A549 (cell line): ENCODE measurements at regions of chr17 and their contacts with region 1.

Region 1: DNA sequence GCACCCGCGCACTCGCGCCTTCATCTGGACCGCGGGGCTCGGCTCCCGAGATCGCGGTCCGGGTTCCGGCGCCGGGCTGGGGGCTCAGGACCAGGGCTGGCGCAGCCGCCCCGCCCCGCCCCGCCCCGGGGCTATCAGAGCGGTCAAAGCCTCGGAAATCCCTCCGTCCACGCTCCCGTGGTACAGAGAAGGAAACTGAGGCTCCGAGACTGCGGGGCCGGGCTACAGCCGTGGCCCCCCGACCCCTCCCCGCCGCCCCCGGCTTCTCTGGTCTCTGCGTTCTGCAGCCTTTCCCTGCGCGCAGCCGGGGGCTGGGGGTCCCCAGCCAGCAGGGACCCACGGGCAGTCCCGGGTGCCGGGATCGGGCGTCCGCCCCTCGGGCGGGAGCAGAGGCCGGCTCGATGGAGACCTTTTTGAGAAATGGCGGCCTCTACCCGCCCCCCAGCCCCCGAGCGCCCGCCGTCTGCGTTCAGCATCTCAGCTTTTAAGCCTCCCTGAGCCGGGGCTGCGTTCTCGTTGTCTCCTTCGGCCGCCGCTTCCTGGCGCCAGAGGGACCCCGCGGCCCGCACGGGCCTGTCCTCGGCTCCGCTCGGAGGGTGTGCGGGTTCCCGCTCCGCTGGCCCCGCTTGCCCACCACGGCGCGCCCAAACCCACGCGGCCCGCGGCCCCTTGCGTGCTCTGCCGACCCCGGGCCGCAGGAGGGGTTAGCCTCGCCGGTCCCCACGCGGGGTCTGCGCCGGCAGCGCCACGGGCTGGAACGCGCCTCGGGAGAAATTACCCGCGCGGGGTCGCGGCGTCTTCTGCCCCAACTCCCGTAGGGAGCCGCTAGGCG is 1.5 kb upstream of the NPTX1 start:
- DNase-seq: peak; percentile 70 to 75
- ATAC-seq: peak; percentile 20 to 70; a peak in 3 of 6 replicates
- H3K4me3 ChIP-seq: peak overlapping the region; percentile 54
- H3K27ac ChIP-seq: peak overlapping the region; percentile 60 to 80
- H3K4me1 ChIP-seq: peaks cover 56% of the 10 kb centered on the region
- CTCF ChIP-seq: peak; percentile 67
- EP300 ChIP-seq: no peak
- POLR2A ChIP-seq: no peak
- RAD21 ChIP-seq: peak; percentile 77 to 90

Region 2: DNA sequence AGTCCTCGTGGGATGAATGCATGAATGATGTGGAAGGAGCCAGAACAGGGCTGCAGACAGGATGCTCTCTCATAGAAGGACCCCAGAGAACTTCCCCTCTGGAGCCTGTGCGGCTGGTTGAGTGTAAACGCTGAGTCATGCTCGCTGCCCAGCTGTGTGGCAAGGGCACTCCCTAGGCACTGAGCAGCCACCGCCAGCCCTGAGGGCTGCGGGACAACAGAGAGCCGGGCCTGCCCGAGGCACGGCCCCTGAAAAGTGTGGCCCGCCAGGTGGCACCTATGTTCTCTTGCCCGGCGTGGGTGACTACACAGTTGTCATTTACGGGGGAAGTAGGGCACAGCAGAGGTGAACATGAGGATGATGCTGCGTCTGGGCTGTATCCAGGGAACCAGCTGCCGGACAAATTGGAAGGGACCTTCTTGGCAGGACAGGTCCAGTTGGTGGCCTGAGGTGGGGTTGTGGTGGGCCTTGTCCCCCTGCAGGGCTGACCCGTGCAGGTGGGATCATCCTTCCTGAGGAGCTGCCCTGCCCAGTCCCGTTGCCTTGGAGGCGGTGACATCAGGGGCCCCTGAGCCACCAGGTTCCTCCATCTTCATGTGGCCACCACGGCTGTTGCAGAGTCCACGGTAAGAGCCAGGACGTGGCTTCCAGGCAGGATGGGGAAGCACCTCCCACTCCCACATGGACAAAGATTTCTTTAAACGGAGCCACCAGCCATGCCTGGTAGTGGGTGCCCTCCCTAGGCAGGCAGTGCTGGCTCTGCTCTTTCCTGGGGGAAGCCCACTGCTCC is 543.8 kb before region 1 on chr17:
- CTCF ChIA-PET with region 1: no interaction called
- POLR2A ChIA-PET with region 1: no interaction called
- DNase-seq: peak; percentile 58 to 60
- ATAC-seq: peak; percentile 21 to 53; a peak in 4 of 6 replicates
- H3K4me3 ChIP-seq: no peak overlapping the region
- H3K27ac ChIP-seq: peak overlapping the region; percentile 94
- H3K4me1 ChIP-seq: peaks cover 69% of the 10 kb centered on the region
- CTCF ChIP-seq: peak; percentile 6; the same call in 1 of the 3 replicates
- EP300 ChIP-seq: no peak
- POLR2A ChIP-seq: no peak
- RAD21 ChIP-seq: no peak; a peak in 1 of 5 replicates

Region 3: DNA sequence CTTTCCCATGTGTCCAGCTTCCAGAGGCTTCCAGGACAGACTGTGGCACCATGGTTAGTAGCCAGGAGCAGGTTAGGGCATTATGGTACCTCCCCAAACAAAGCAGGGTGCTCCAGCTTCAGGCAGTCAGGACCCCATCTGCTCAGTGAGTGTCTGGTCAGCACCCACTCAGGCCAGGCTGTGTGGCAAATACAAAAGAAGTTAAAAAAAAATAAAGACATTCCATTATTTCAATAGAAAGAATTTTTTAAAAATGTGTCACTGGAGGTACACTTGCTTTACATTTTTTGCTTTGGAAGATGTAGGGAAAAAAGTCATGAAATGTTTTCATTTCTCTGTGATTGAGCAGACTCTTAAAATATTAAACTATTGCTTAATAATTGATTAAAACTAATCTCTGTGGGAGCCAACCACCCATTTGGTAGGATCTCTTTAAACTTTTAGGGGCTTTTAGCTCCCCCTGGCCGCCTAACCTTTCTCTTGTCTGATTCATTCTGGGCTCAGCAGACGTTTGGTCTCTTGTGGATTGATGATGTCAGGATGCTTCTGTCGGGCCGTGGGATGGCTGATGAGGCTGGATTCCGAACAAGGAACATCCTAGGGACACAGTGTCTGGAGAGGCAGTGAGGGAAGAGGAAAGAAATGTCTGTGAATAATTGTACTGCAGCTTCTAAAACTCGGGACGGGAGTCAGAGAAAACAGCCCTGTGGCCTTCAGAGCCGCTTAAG is 27.0 kb after region 1 on chr17:
- CTCF ChIA-PET with region 1: interaction called, 12 read pairs
- POLR2A ChIA-PET with region 1: interaction called, 3 read pairs
- DNase-seq: peak; percentile 67 to 83
- ATAC-seq: peak; percentile 46 to 70; a peak in 3 of 6 replicates
- H3K4me3 ChIP-seq: no peak overlapping the region
- H3K27ac ChIP-seq: peak overlapping the region; percentile 83 to 85
- H3K4me1 ChIP-seq: peaks cover 48% of the 10 kb centered on the region
- CTCF ChIP-seq: peak; percentile 40
- EP300 ChIP-seq: peak; percentile 17 to 60; a peak in 1 of 5 replicates
- POLR2A ChIP-seq: no peak
- RAD21 ChIP-seq: peak in 1 of 2 experiments; percentile 51; a peak in 2 of 5 replicates

Region 4: DNA sequence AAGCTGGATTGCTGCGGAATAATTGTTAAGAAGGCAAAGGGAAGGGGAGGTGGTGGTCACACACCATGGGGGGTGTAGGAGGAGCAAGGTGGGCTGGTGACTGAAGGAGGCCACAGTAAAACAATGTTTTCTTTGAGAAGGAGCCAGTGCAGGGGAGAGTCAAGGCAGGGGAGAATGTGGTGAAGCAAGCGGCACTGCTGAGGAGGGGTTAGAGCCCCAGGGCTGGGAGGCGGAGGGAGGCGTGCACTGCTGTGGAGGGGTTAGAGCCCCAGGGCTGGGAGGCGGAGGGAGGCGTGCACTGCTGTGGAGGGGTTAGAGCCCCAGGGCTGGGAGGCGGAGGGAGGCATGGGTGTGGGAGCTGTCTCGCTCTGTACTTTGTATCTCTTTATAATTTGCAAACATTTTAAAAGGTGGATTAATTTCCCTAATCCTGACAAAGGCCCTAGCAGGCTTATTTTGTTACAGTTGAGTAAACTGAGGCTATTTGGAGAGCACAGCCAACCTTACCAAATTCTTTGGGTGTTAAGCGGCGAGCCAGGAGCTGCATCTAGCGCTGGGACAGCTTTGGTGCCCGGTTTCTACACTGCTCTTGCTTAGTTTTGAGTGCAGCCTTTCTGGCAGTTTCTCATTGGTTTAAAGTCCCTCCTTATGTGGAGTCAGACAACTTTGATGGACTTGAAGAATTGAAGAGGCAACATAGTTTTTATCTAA is 87.6 kb after region 1 on chr17:
- CTCF ChIA-PET with region 1: interaction called, 17 read pairs
- POLR2A ChIA-PET with region 1: no interaction called
- DNase-seq: no peak
- ATAC-seq: peak; percentile 32 to 36; a peak in 3 of 6 replicates
- H3K4me3 ChIP-seq: no peak overlapping the region
- H3K27ac ChIP-seq: no peak overlapping the region
- H3K4me1 ChIP-seq: no peaks in the 10 kb centered on the region
- CTCF ChIP-seq: no peak
- EP300 ChIP-seq: no peak
- POLR2A ChIP-seq: no peak
- RAD21 ChIP-seq: no peak